ENCODE measurements at regions of chr5 and their contacts with region 1.

Region 1: DNA sequence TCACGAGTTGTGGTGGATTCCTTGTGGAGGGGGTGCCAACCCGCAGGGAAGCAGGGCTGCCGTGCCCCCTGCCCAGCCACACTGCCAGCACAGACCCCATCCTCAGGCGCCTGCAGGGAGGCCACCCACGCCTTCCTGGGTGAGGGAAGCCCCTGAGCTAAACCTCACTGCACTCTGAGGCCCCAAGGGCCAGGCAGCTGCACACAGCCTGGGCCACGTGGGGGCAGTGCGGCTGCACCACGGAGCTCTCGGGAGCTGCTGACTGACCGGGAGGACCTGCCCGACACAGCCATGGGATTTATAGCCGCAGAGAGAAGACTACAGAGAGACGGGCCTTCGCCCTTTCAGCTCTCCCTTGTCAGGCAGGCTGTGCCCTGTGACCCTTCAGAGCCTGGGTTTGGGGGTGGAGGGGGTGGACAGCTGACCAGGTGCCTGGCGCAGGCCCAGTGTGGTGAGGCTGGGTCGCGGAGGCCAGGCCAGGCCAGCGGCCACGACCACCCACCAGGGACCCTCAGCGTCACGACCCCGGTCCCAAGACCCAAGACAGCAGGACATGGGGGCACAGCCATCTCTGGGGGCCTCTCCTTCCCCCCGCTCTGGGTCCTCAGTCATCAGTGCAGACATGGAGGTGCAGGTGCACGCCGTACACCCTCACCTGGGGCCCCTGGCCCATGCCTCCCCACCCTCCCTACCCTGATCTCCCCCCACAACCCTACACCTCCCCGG is 4.3 kb upstream of the AHRR start:
- DNase-seq: peak; percentile 76
- H3K4me3 Mint-ChIP-seq: no peak overlapping the region
- H3K27ac Mint-ChIP-seq: no peak overlapping the region
- H3K4me1 Mint-ChIP-seq: peaks cover 7% of the 10 kb centered on the region
- H3K27me3 Mint-ChIP-seq: peaks cover 11% of the 10 kb centered on the region

Region 2: GRCh38 chr5:334903-335739 is 17.9 kb after region 1 on chr5:
- CTCF ChIA-PET with region 1: interaction called, 5 read pairs
- POLR2A ChIA-PET with region 1: no interaction called
- intact Hi-C with region 1: loop called (anchors 1 kb)
- DNase-seq: no peak
- H3K4me3 Mint-ChIP-seq: peak overlapping the region; percentile 12
- H3K27ac Mint-ChIP-seq: peak overlapping the region; percentile 66
- H3K4me1 Mint-ChIP-seq: peaks cover 33% of the 10 kb centered on the region
- H3K27me3 Mint-ChIP-seq: peaks cover 7% of the 10 kb centered on the region

Region 3: GRCh38 chr5:424301-425110 is 107.3 kb after region 1 on chr5:
- CTCF ChIA-PET with region 1: interaction called, 24 read pairs
- POLR2A ChIA-PET with region 1: interaction called, 3 read pairs
- intact Hi-C with region 1: no loop called
- DNase-seq: no peak
- H3K4me3 Mint-ChIP-seq: no peak overlapping the region
- H3K27ac Mint-ChIP-seq: no peak overlapping the region
- H3K4me1 Mint-ChIP-seq: no peaks in the 10 kb centered on the region
- H3K27me3 Mint-ChIP-seq: peaks cover 10% of the 10 kb centered on the region

Region 4: GRCh38 chr5:431001-431710 is 113.9 kb after region 1 on chr5:
- CTCF ChIA-PET with region 1: interaction called, 24 read pairs
- POLR2A ChIA-PET with region 1: interaction called, 3 read pairs
- intact Hi-C with region 1: loop called (anchors 2 kb)
- DNase-seq: peak; percentile 61
- H3K4me3 Mint-ChIP-seq: no peak overlapping the region
- H3K27ac Mint-ChIP-seq: no peak overlapping the region
- H3K4me1 Mint-ChIP-seq: no peaks in the 10 kb centered on the region
- H3K27me3 Mint-ChIP-seq: peaks cover 13% of the 10 kb centered on the region